ENCODE measurements at regions of chr4 and their contacts with region 1.

Region 1: GRCh38 chr4:107824353-107825071 is at the start of gene SGMS2:
- DNase-seq: no peak
- H3K4me3 Mint-ChIP-seq: peak within 1 kb of the TSS; percentile 85
- H3K27ac Mint-ChIP-seq: peak within 1 kb of the TSS; percentile 70
- H3K4me1 Mint-ChIP-seq: peaks cover 9% of the 10 kb centered on the region
- H3K27me3 Mint-ChIP-seq: peaks cover 55% of the 10 kb centered on the region
- total RNA-seq, gene SGMS2: 0.64 and 1.1 TPM in 2 replicates

Region 2: DNA sequence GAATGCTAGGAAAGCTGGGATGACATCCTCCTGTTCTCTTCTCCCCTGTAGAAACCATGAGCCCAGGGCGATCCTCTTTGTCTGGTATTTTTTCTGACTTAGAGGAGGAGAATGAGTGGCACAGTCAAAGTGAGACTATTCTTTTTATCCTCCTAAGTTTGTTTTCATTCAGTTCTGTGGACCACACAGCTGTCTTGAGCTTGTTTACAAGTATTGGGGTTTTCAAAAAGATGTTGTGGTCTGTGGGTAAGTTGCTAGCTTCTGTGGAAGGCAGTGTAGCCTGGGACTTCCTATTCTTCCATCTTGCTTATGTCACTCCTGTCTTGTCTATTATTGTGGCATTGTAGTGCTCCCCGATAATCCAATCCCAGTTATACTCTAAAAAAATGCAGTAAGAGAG is 327.5 kb before region 1 on chr4:
- intact Hi-C with region 1: no loop called
- DNase-seq: no peak
- H3K4me3 Mint-ChIP-seq: no peak overlapping the region
- H3K27ac Mint-ChIP-seq: no peak overlapping the region
- H3K4me1 Mint-ChIP-seq: peaks cover 7% of the 10 kb centered on the region
- H3K27me3 Mint-ChIP-seq: peaks cover 2% of the 10 kb centered on the region

Region 3: GRCh38 chr4:107757864-107758476 is 66.5 kb before region 1 on chr4:
- intact Hi-C with region 1: loop called (anchors 5 kb)
- DNase-seq: no peak
- H3K4me3 Mint-ChIP-seq: no peak overlapping the region
- H3K27ac Mint-ChIP-seq: no peak overlapping the region
- H3K4me1 Mint-ChIP-seq: no peaks in the 10 kb centered on the region
- H3K27me3 Mint-ChIP-seq: peaks cover 14% of the 10 kb centered on the region

Region 4: DNA sequence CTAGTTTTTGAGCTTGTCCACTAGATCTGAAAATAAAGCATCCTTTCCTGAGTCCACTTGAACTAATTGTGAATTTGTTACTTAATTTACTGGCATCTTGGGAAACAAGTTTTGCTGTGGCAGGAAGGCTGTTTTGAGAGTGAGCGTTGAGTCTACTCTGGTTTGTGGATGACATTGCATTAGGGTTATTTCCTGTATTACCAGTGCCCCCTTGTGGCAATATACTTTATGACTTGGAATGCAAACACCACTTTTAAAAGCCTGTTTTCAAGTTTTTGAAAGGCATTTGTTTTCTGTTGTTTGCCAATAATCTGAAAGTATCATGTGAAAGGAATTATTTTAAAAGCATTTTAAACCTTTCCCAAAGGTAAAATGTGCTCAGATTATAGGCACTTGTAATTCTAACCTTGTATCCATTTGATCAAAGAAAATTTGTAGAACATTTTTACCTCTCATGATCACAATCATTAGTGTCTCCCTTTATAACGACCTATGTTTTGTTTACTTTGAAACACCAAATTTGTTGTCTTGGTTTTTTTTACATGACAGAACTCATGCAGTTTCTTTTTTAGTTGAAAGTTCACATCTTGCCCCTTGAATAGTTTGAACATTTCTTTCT is 88.9 kb after region 1 on chr4:
- intact Hi-C with region 1: loop called (anchors 5 kb)
- DNase-seq: peak; percentile 26
- H3K4me3 Mint-ChIP-seq: no peak overlapping the region
- H3K27ac Mint-ChIP-seq: no peak overlapping the region
- H3K4me1 Mint-ChIP-seq: no peaks in the 10 kb centered on the region
- H3K27me3 Mint-ChIP-seq: peaks cover 8% of the 10 kb centered on the region

Region 5: GRCh38 chr4:107930821-107931774 is 106.6 kb after region 1 on chr4 and contains the start of gene CYP2U1:
- intact Hi-C with region 1: loop called (anchors 5 kb)
- DNase-seq: peak; percentile 81
- H3K4me3 Mint-ChIP-seq: peak within 1 kb of the TSS; percentile 86
- H3K27ac Mint-ChIP-seq: peak within 1 kb of the TSS; percentile 82
- H3K4me1 Mint-ChIP-seq: peaks cover 20% of the 10 kb centered on the region
- H3K27me3 Mint-ChIP-seq: peaks cover 2% of the 10 kb centered on the region
- total RNA-seq, gene CYP2U1: 1.1 and 1.5 TPM in 2 replicates

Region 6: DNA sequence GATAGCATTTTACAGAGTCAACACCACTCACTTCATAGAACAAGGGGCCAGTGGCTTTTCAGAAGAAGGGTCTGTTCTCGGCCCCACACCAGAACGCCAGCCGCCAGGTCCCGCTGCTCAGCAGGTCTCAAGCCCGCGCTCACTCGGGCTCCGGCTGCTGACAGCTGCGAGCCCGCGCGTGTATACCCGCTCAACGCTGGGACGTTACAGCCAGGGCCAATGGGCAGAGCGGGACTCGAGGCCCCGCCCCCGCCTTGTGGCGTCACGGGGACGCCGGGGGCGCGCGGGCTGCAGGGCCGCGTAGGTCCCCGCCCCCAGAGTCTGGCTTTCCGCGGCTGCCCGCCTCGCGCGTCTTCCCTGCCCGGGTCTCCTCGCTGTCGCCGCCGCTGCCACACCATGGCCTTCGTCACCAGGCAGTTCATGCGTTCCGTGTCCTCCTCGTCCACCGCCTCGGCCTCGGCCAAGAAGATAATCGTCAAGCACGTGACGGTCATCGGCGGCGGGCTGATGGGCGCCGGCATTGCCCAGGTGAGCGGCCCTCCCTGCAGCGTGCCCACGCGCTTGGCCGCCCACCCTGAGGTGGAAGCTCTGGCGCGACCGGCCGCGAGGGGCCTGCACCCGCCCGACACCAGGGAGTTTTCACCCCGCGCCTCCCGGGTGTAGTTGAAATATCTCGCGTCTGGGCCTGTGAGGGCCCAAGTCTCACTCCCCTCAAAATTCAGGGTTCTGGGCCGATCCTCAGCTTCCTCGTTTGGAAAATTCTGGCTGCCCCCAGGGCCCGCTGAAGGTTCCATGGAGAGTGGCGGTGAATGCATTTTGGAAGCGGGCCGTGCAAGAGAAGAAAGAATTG is 165.2 kb after region 1 on chr4 and contains the start of gene HADH:
- intact Hi-C with region 1: loop called (anchors 5 kb)
- DNase-seq: peak; percentile 95
- H3K4me3 Mint-ChIP-seq: peak within 1 kb of the TSS; percentile 97
- H3K27ac Mint-ChIP-seq: peak within 1 kb of the TSS; percentile 96
- H3K4me1 Mint-ChIP-seq: peaks cover 57% of the 10 kb centered on the region
- H3K27me3 Mint-ChIP-seq: no peaks in the 10 kb centered on the region
- total RNA-seq, gene HADH: 33.9 and 36.8 TPM in 2 replicates